CD8-positive, alpha-beta T cell (primary cell): ENCODE measurements at regions of chr17 and their contacts with region 1.

Region 1: GRCh38 chr17:2511462-2512369 is at the start of gene METTL16:
- DNase-seq: peak; percentile 92 to 99 (median 96)
- ATAC-seq: peak; percentile 97
- H3K4me3 ChIP-seq: peak within 1 kb of the TSS; percentile 81 to 84
- H3K4me3 Mint-ChIP-seq: no peak within 1 kb of the TSS
- H3K27ac ChIP-seq: peak within 1 kb of the TSS; percentile 96 to 97
- H3K27ac Mint-ChIP-seq: no peak within 1 kb of the TSS
- H3K4me1 ChIP-seq: peaks cover 35% of the 10 kb centered on the region
- H3K4me1 Mint-ChIP-seq: peaks cover 21% of the 10 kb centered on the region
- H3K27me3 ChIP-seq: no peaks in the 10 kb centered on the region
- H3K27me3 Mint-ChIP-seq: no peaks in the 10 kb centered on the region
- CTCF ChIP-seq: no peak
- total RNA-seq, gene METTL16: 59.8 to 69.5 TPM

Region 2: GRCh38 chr17:2392252-2393173 is 119.2 kb before region 1 on chr17:
- CTCF ChIA-PET with region 1: no interaction called
- POLR2A ChIA-PET with region 1: no interaction called
- intact Hi-C with region 1: loop called in 1 of 2 experiments (anchors 5 kb)
- DNase-seq: peak; percentile 95 to 99 (median 97)
- ATAC-seq: peak; percentile 66
- H3K4me3 ChIP-seq: peak overlapping the region; percentile 83 to 95
- H3K4me3 Mint-ChIP-seq: peak overlapping the region; percentile 91
- H3K27ac ChIP-seq: peak overlapping the region; percentile 95 to 100
- H3K27ac Mint-ChIP-seq: peak overlapping the region; percentile 97
- H3K4me1 ChIP-seq: peaks cover 53% of the 10 kb centered on the region
- H3K4me1 Mint-ChIP-seq: peaks cover 50% of the 10 kb centered on the region
- H3K27me3 ChIP-seq: no peaks in the 10 kb centered on the region
- H3K27me3 Mint-ChIP-seq: no peaks in the 10 kb centered on the region
- CTCF ChIP-seq: no peak

Region 3: DNA sequence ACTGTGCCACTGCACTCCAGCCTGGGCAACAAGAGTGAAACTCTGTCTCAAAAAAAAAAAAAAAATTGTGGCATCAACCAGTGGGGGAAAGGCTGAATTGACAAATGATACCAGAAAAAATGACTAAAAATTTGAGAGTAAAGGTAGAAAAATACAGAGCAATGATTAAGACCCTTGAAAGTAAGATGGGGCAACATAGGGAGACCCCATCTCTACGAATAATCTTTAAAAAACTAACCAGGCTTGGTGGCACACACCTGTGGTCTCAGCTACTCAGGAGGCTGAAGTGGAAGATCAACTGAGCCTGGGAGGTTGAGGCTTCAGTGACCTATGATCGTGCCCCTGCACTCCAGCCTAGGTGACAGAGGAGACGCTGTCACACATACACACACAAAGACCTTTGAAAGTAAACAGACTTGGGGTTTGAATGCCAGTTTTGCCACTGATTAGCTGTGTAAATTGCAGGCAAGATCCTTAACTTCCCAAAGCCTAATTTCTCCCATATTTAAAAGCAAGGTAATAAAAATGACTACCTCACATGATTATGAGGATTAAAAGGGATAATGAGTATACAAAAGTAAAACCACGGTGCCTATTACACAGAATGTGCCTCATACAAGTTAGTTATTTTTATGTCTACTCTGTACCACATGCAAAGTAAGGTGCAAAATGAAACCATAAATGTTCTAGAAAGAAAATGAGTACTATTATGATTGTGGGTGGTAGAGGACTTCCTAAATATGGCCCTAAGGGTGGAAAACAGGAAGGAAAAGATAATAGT is 60.0 kb after region 1 on chr17:
- CTCF ChIA-PET with region 1: no interaction called
- POLR2A ChIA-PET with region 1: no interaction called
- intact Hi-C with region 1: no loop called
- DNase-seq: no peak
- ATAC-seq: no peak
- H3K4me3 ChIP-seq: no peak overlapping the region
- H3K4me3 Mint-ChIP-seq: no peak overlapping the region
- H3K27ac ChIP-seq: no peak overlapping the region
- H3K27ac Mint-ChIP-seq: peak overlapping the region; percentile 67
- H3K4me1 ChIP-seq: no peaks in the 10 kb centered on the region
- H3K4me1 Mint-ChIP-seq: peaks cover 6% of the 10 kb centered on the region
- H3K27me3 ChIP-seq: no peaks in the 10 kb centered on the region
- H3K27me3 Mint-ChIP-seq: no peaks in the 10 kb centered on the region
- CTCF ChIP-seq: no peak

Region 4: GRCh38 chr17:2592971-2593820 is 81.5 kb after region 1 on chr17 and contains the start of gene PAFAH1B1:
- CTCF ChIA-PET with region 1: no interaction called
- POLR2A ChIA-PET with region 1: interaction called, 10 read pairs
- intact Hi-C with region 1: loop called (anchors 1 kb)
- DNase-seq: peak; percentile 90 to 98 (median 94)
- ATAC-seq: peak; percentile 76
- H3K4me3 ChIP-seq: peak within 1 kb of the TSS; percentile 96 to 97
- H3K4me3 Mint-ChIP-seq: peak within 1 kb of the TSS; percentile 87
- H3K27ac ChIP-seq: peak within 1 kb of the TSS; percentile 86 to 97
- H3K27ac Mint-ChIP-seq: peak within 1 kb of the TSS; percentile 95
- H3K4me1 ChIP-seq: peaks cover 25% of the 10 kb centered on the region
- H3K4me1 Mint-ChIP-seq: peaks cover 33% of the 10 kb centered on the region
- H3K27me3 ChIP-seq: no peaks in the 10 kb centered on the region
- H3K27me3 Mint-ChIP-seq: no peaks in the 10 kb centered on the region
- CTCF ChIP-seq: no peak
- total RNA-seq, gene PAFAH1B1: 139 to 157 TPM

Region 5: DNA sequence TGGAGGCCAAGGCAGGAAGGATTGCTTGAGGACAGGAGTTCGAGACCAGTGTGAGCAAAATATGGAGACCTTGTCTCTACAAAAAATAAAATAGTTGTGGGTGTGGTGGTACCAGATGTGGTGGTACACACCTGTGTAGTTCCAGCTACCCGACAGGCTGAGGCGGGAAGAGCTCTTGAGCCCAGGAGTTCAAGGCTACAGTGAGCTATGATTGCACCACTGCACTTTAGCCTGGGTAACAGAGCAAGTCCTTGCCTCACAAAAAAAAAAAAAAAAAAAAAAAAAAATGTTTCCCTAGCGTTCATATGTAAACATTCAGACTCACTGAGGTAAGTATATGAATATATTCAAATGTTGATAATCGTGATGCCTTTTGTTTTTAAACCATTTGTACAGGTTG is 160.3 kb after region 1 on chr17:
- CTCF ChIA-PET with region 1: interaction called, 3 read pairs
- POLR2A ChIA-PET with region 1: no interaction called
- intact Hi-C with region 1: loop called (anchors 1 to 2 kb)
- DNase-seq: no peak
- ATAC-seq: no peak
- H3K4me3 ChIP-seq: no peak overlapping the region
- H3K4me3 Mint-ChIP-seq: no peak overlapping the region
- H3K27ac ChIP-seq: no peak overlapping the region
- H3K27ac Mint-ChIP-seq: no peak overlapping the region
- H3K4me1 ChIP-seq: no peaks in the 10 kb centered on the region
- H3K4me1 Mint-ChIP-seq: peaks cover 3% of the 10 kb centered on the region
- H3K27me3 ChIP-seq: no peaks in the 10 kb centered on the region
- H3K27me3 Mint-ChIP-seq: no peaks in the 10 kb centered on the region
- CTCF ChIP-seq: no peak

Region 6: GRCh38 chr17:2711601-2712299 is 200.0 kb after region 1 on chr17 and contains the start of gene CLUH:
- CTCF ChIA-PET with region 1: no interaction called
- POLR2A ChIA-PET with region 1: no interaction called
- intact Hi-C with region 1: loop called in 1 of 2 experiments (anchors 1 kb)
- DNase-seq: peak; percentile 90 to 98 (median 94)
- ATAC-seq: peak; percentile 93
- H3K4me3 ChIP-seq: peak within 1 kb of the TSS; percentile 64 to 84
- H3K4me3 Mint-ChIP-seq: peak within 1 kb of the TSS; percentile 88
- H3K27ac ChIP-seq: peak within 1 kb of the TSS; percentile 41 to 47
- H3K27ac Mint-ChIP-seq: peak within 1 kb of the TSS; percentile 77
- H3K4me1 ChIP-seq: peaks cover 45% of the 10 kb centered on the region
- H3K4me1 Mint-ChIP-seq: peaks cover 35% of the 10 kb centered on the region
- H3K27me3 ChIP-seq: no peaks in the 10 kb centered on the region
- H3K27me3 Mint-ChIP-seq: no peaks in the 10 kb centered on the region
- CTCF ChIP-seq: no peak
- total RNA-seq, gene CLUH: 50.8 to 51.1 TPM